ENCODE measurements at regions of chr5 and their contacts with region 1.

Region 1: GRCh38 chr5:38193015-38193581 is 65.3 kb upstream of the EGFLAM start:
- DNase-seq: peak; percentile 53
- ATAC-seq: peak; percentile 97
- H3K4me3 ChIP-seq: no peak overlapping the region
- H3K27ac ChIP-seq: no peak overlapping the region
- H3K4me1 ChIP-seq: no peaks in the 10 kb centered on the region
- H3K27me3 ChIP-seq: peaks cover 51% of the 10 kb centered on the region
- CTCF ChIP-seq: peak; percentile 93
- POLR2A ChIP-seq: 0 out of 2 replicates have a peak, but pooled peaks have one; percentile 26
- RAD21 ChIP-seq: peak; percentile 98

Region 2: DNA sequence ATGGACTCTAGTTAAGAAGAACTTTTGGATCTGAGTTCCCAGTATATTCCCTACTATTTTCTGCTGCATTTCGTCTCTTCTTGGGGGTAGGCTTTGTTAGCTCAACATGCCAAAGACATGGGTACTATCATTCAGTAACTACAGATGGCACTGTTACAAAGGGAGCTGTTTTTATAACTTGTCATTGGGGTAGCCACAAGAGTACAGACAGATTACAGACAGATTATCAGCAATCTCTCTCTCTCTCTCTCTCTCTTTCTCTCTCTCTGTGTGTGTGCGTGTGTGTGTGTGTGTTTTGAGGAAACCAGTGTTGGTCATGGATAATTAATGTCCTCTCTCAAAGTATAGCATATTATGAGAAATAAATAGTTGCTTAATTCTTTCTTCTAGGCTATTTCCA is 697.9 kb before region 1 on chr5:
- CTCF ChIA-PET with region 1: interaction called, 3 read pairs
- POLR2A ChIA-PET with region 1: no interaction called
- dilution Hi-C with region 1: no loop called
- in situ Hi-C with region 1: no loop called
- intact Hi-C with region 1: loop called (anchors 1 kb)
- DNase-seq: peak; percentile 39
- ATAC-seq: peak; percentile 46
- H3K4me3 ChIP-seq: no peak overlapping the region
- H3K27ac ChIP-seq: no peak overlapping the region
- H3K4me1 ChIP-seq: peaks cover 4% of the 10 kb centered on the region; the same call in 1 of the 2 replicates
- H3K27me3 ChIP-seq: no peaks in the 10 kb centered on the region
- CTCF ChIP-seq: peak; percentile 32
- POLR2A ChIP-seq: no peak
- RAD21 ChIP-seq: peak; percentile 34; the same call in 1 of the 2 replicates

Region 3: GRCh38 chr5:37722236-37723146 is 470.6 kb before region 1 on chr5:
- CTCF ChIA-PET with region 1: no interaction called
- POLR2A ChIA-PET with region 1: no interaction called
- dilution Hi-C with region 1: no loop called
- in situ Hi-C with region 1: no loop called
- intact Hi-C with region 1: loop called (anchors 1 kb)
- DNase-seq: peak; percentile 96
- ATAC-seq: peak; percentile 93
- H3K4me3 ChIP-seq: no peak overlapping the region
- H3K27ac ChIP-seq: no peak overlapping the region
- H3K4me1 ChIP-seq: peaks cover 9% of the 10 kb centered on the region
- H3K27me3 ChIP-seq: no peaks in the 10 kb centered on the region
- CTCF ChIP-seq: no peak
- POLR2A ChIP-seq: no peak
- RAD21 ChIP-seq: peak; percentile 25; the same call in 1 of the 2 replicates

Region 4: DNA sequence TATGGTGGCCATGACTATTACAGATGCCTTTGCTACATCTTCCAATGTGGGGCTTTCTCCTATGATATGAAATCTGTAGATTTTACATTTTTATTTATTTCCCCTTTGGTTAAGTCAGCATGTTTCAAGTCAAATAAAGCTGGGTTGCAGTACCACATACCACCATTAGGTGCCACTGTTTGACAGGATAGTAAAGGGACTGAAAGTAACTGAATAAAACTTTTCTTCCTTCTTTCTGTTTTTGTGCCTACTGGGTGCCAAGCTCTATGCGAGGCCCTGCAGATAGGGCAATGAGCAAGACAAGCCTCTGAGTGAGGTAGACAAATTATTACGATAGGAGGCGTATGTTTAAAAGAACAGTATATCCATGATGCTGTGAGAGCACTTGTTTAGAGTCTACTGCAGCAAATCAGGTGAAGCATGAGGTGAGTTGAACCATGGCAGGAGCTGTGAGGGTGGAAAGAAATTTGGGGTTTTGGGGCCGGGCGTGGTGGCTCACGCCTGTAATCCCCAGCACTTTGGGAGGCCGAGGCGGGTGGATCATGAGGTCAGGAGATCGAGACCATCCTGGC is 418.1 kb before region 1 on chr5:
- CTCF ChIA-PET with region 1: no interaction called
- POLR2A ChIA-PET with region 1: no interaction called
- dilution Hi-C with region 1: no loop called
- in situ Hi-C with region 1: no loop called
- intact Hi-C with region 1: loop called (anchors 5 kb)
- DNase-seq: peak; percentile 31
- ATAC-seq: no peak
- H3K4me3 ChIP-seq: no peak overlapping the region
- H3K27ac ChIP-seq: no peak overlapping the region
- H3K4me1 ChIP-seq: peaks cover 18% of the 10 kb centered on the region
- H3K27me3 ChIP-seq: no peaks in the 10 kb centered on the region
- CTCF ChIP-seq: peak; percentile 54
- POLR2A ChIP-seq: no peak
- RAD21 ChIP-seq: peak; percentile 59

Measured in IMR-90 (cell line).